AG04450 (cell line): ENCODE measurements at regions of chr6 and their contacts with region 1.

Region 1: DNA sequence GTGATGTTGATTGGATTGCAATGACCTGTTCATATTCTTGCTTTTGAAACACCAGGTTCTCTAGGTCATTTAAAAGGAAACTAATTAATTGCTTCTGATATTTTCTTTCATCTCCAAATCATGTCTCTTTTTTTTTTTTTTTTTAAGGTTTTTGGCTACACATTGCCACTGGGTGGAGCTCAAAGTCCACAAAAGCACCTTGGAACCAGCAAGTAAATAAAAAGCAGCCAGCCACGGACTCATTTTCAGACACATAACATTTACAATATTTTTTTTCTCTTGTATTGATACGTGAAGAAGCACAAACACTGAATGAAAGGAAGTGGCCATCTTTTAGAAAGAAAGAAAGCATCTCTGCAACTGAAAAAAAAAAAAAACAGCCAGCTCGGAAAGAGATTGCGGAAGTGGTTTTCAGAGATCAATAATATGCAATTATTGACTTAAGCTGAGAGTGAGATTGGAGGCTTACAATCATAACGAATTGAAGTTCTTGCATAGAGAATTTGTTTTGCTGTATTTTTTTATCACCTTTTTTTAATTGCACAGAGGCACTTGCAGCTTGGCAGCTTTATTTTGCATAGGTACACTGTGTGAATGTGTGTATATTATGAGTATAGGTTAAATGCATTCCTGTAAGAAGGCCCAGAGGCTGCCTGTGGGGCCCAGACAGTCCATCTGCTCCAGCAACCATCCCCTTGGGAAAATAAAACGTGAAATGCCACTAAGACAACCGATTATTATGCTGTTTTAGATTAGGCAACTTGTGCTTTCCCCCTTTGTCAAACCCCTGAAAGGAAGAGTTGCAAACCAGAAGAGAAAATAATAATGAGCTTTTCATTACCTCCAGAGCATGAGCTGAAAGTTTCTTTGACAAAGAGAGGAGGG is 28.2 kb downstream of the CGA start:
- DNase-seq: peak; percentile 45
- H3K4me3 ChIP-seq: no peak overlapping the region
- H3K27ac ChIP-seq: no peak overlapping the region
- H3K27me3 ChIP-seq: peaks cover 13% of the 10 kb centered on the region
- CTCF ChIP-seq: peak; percentile 66

Region 2: DNA sequence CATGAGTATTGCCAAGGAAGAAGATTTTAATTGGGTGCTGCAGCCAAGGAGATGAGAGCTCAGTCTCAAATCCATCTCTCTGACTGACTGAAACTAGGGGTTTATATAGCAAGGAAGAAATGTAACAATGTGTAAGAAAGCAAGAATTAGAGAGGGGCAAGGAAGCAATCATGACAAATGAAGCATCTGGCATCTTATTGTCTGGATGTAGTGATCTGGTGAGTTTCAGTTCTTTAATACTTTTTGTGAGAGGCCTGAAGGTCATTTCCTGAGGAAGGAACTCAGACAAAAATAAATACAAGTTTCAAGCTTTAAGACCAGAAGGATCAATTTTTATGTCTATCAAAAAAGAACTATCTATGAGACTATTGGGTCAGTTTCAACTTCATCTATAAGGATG is 65.2 kb before region 1 on chr6:
- CTCF ChIA-PET with region 1: no interaction called
- POLR2A ChIA-PET with region 1: no interaction called
- DNase-seq: no peak
- H3K4me3 ChIP-seq: no peak overlapping the region
- H3K27ac ChIP-seq: no peak overlapping the region
- H3K27me3 ChIP-seq: no peaks in the 10 kb centered on the region
- CTCF ChIP-seq: no peak

Region 3: GRCh38 chr6:87049779-87050178 is 16.9 kb before region 1 on chr6:
- CTCF ChIA-PET with region 1: interaction called, 12 read pairs
- POLR2A ChIA-PET with region 1: no interaction called
- DNase-seq: no peak
- H3K4me3 ChIP-seq: no peak overlapping the region
- H3K27ac ChIP-seq: no peak overlapping the region
- H3K27me3 ChIP-seq: no peaks in the 10 kb centered on the region
- CTCF ChIP-seq: no peak

Region 4: DNA sequence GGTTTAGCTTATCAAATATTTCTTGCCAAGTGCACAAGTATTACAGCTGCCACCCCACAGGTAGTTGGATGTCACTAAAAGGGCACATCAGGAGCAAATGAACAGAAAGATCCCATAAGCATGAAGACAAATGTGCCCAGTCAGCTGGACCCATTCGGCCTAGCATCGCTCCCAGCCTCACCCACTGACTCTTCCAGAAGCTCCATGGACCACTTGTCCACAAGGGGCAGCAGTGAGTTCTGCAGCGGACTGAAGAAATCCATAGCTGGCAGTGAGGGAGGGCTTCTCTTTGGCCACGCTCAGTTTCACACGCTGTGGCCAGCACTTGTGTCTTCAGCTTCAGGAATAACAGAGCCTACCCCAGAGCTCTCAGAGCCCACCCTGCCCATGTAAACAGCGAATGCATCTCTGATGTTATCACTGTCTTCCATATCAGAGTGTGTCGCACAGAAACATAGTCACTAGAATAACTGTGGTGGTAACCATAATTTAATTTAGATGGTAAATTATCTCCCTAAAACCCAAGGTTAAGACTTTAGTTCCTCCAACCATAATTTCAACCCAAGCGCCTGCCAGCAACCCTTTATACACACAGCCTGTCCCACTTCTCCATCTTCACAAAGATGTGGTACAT is 12.4 kb after region 1 on chr6:
- CTCF ChIA-PET with region 1: interaction called, 53 read pairs
- POLR2A ChIA-PET with region 1: no interaction called
- DNase-seq: peak; percentile 20
- H3K4me3 ChIP-seq: no peak overlapping the region
- H3K27ac ChIP-seq: no peak overlapping the region
- H3K27me3 ChIP-seq: no peaks in the 10 kb centered on the region
- CTCF ChIP-seq: peak; percentile 93

Region 5: DNA sequence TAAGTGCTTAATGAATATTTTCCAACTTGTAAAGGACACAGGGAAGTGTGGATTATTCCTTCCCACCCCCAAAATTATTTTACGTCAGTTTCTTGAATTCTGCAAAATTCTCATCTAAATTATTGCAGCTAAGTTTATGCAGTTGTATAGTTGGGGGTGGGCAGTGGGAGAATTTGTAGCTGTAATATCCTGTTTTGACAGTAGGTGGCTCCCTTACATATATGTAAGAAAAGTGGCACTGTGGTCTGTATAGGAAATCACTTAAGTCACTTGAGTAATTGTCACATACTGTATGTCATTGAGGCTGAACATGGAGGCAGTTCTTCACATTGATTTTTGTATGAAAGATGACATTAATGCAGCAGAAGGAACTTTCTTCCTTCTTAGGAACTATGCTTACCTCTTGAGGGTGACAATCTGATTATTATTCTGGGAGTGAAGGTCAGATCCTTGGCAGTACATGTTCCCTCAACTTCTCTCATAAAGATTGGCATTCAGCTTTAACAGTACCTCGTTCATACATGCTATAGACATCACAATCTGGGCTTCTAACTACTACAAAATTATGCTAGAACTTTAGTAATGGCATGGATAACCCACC is 326.4 kb after region 1 on chr6:
- CTCF ChIA-PET with region 1: interaction called, 38 read pairs
- POLR2A ChIA-PET with region 1: no interaction called
- DNase-seq: no peak
- H3K4me3 ChIP-seq: no peak overlapping the region
- H3K27ac ChIP-seq: no peak overlapping the region
- H3K27me3 ChIP-seq: no peaks in the 10 kb centered on the region
- CTCF ChIP-seq: peak; percentile 73

Region 6: DNA sequence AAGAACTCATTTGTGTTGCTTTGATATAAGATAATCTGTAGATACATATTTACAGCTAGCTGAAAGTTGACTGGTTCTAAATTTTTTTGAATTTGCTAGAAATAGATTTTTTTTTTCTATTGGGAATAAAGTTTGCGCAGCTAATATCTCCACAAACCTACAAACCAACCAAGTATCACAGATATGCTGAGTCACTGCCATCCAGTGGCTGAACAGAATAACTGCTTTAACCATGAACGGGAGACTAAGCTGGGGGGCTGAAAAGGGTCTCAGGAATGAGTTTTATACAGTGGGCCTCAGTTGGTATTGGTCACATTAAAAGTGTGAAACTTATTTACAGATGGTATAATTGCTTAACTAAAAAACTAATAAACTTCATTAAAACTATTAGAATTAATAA is 1426.1 kb after region 1 on chr6:
- CTCF ChIA-PET with region 1: interaction called, 11 read pairs
- POLR2A ChIA-PET with region 1: no interaction called
- DNase-seq: no peak
- H3K4me3 ChIP-seq: no peak overlapping the region
- H3K27ac ChIP-seq: no peak overlapping the region
- H3K27me3 ChIP-seq: no peaks in the 10 kb centered on the region
- CTCF ChIP-seq: peak; percentile 23